ENCODE measurements at regions of chr11 and their contacts with region 1.

Region 1: DNA sequence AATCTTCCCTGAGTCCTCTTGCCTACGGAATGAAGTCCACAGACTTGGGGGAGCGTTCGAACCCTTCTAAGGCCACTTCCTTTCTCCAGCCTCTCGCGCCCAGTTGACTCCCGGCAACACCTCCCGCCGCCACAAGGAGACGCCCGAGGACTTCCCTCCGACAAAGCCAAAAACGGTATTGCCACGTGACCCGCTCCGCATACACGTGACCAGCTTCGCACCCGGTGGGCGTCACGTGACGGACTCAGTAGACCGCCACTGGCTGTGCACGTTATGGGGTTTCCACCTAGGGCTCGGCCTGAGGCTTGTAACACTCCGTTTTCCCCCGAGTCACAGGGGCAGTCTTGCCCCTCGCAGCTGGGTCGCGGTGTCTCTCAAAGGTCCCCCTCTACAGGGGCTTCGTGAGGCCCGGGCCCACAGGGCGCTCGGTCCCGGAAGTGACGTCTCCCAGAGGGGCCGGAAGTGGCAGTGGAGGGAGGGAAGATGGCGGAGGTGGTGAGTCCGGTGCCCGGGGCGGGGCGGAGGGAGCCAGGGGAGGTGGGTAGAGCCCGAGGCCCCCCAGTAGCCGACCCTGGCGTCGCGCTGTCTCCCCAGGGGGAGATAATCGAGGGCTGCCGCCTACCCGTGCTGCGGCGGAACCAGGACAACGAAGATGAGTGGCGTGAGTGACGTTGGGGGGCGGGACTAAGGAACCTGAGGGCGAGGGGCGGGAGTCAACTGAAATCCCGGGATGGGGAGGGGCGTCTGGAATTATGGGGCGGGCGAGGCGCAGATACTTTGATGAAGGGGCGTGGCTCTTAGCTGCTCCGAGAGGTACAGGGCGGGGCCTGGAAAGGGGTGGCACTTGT is at the start of gene KAT5:
- DNase-seq: peak; percentile 98
- ATAC-seq: peak; percentile 81
- H3K4me3 Mint-ChIP-seq: peak within 1 kb of the TSS; percentile 95
- H3K27ac Mint-ChIP-seq: peak within 1 kb of the TSS; percentile 99
- H3K4me1 Mint-ChIP-seq: peaks cover 25% of the 10 kb centered on the region
- H3K27me3 Mint-ChIP-seq: no peaks in the 10 kb centered on the region
- CTCF ChIP-seq: peak; percentile 70
- total RNA-seq, gene KAT5: 108 and 120 TPM in 2 replicates

Region 2: GRCh38 chr11:64823568-64824133 is 888.4 kb before region 1 on chr11:
- CTCF ChIA-PET with region 1: no interaction called
- POLR2A ChIA-PET with region 1: no interaction called
- intact Hi-C with region 1: no loop called
- DNase-seq: no peak
- ATAC-seq: no peak
- H3K4me3 Mint-ChIP-seq: no peak overlapping the region
- H3K27ac Mint-ChIP-seq: no peak overlapping the region
- H3K4me1 Mint-ChIP-seq: no peaks in the 10 kb centered on the region
- H3K27me3 Mint-ChIP-seq: no peaks in the 10 kb centered on the region
- CTCF ChIP-seq: no peak

Region 3: GRCh38 chr11:65625628-65626342 is 86.2 kb before region 1 on chr11:
- CTCF ChIA-PET with region 1: interaction called, 24 read pairs
- POLR2A ChIA-PET with region 1: interaction called, 15 read pairs
- intact Hi-C with region 1: loop called (anchors 1 kb)
- DNase-seq: peak; percentile 65
- ATAC-seq: peak; percentile 96
- H3K4me3 Mint-ChIP-seq: no peak overlapping the region
- H3K27ac Mint-ChIP-seq: peak overlapping the region; percentile 52
- H3K4me1 Mint-ChIP-seq: peaks cover 8% of the 10 kb centered on the region
- H3K27me3 Mint-ChIP-seq: no peaks in the 10 kb centered on the region
- CTCF ChIP-seq: no peak

Region 4: GRCh38 chr11:65773784-65774411 is 61.9 kb after region 1 on chr11:
- CTCF ChIA-PET with region 1: interaction called, 17 read pairs
- POLR2A ChIA-PET with region 1: interaction called, 6 read pairs
- intact Hi-C with region 1: loop called (anchors 1 kb)
- DNase-seq: no peak
- ATAC-seq: no peak
- H3K4me3 Mint-ChIP-seq: no peak overlapping the region
- H3K27ac Mint-ChIP-seq: no peak overlapping the region
- H3K4me1 Mint-ChIP-seq: peaks cover 9% of the 10 kb centered on the region
- H3K27me3 Mint-ChIP-seq: no peaks in the 10 kb centered on the region
- CTCF ChIP-seq: no peak

Region 5: GRCh38 chr11:65833297-65834030 is 121.5 kb after region 1 on chr11 and contains the start of gene SNX32:
- CTCF ChIA-PET with region 1: interaction called, 3 read pairs
- POLR2A ChIA-PET with region 1: interaction called, 10 read pairs
- intact Hi-C with region 1: no loop called
- DNase-seq: peak; percentile 92
- ATAC-seq: peak; percentile 99
- H3K4me3 Mint-ChIP-seq: no peak within 1 kb of the TSS
- H3K27ac Mint-ChIP-seq: no peak within 1 kb of the TSS
- H3K4me1 Mint-ChIP-seq: peaks cover 8% of the 10 kb centered on the region
- H3K27me3 Mint-ChIP-seq: no peaks in the 10 kb centered on the region
- CTCF ChIP-seq: no peak
- total RNA-seq, gene SNX32: 0.37 and 1.0 TPM in 2 replicates

Region 6: GRCh38 chr11:65900125-65900898 is 188.3 kb after region 1 on chr11 and contains the start of gene FOSL1:
- CTCF ChIA-PET with region 1: no interaction called
- POLR2A ChIA-PET with region 1: interaction called, 10 read pairs
- intact Hi-C with region 1: no loop called
- DNase-seq: peak; percentile 82
- ATAC-seq: peak; percentile 90
- H3K4me3 Mint-ChIP-seq: peak within 1 kb of the TSS; percentile 72
- H3K27ac Mint-ChIP-seq: no peak within 1 kb of the TSS
- H3K4me1 Mint-ChIP-seq: peaks cover 13% of the 10 kb centered on the region
- H3K27me3 Mint-ChIP-seq: peaks cover 2% of the 10 kb centered on the region
- CTCF ChIP-seq: no peak
- total RNA-seq, gene FOSL1: 1.0 and 1.4 TPM in 2 replicates

Region 7: GRCh38 chr11:66268283-66268951 is 556.4 kb after region 1 on chr11 and contains the start of gene RAB1B:
- CTCF ChIA-PET with region 1: no interaction called
- POLR2A ChIA-PET with region 1: interaction called, 3 read pairs
- intact Hi-C with region 1: loop called (anchors 5 kb)
- DNase-seq: peak; percentile 98
- ATAC-seq: peak; percentile 76
- H3K4me3 Mint-ChIP-seq: peak within 1 kb of the TSS; percentile 90
- H3K27ac Mint-ChIP-seq: peak within 1 kb of the TSS; percentile 97
- H3K4me1 Mint-ChIP-seq: peaks cover 32% of the 10 kb centered on the region
- H3K27me3 Mint-ChIP-seq: no peaks in the 10 kb centered on the region
- CTCF ChIP-seq: no peak
- total RNA-seq, gene RAB1B: 115 and 118 TPM in 2 replicates